ENCODE measurements at regions of chr1 and their contacts with region 1.

Region 1: GRCh38 chr1:17502326-17502778 is 37.1 kb upstream of the ARHGEF10L start:
- DNase-seq: peak; percentile 96
- H3K4me3 ChIP-seq: no peak overlapping the region
- H3K27ac ChIP-seq: peak overlapping the region; percentile 55 to 78 (median 72)
- H3K4me1 ChIP-seq: peaks cover 0 to 14% (median 13%) of the 10 kb centered on the region in 4 donors
- H3K27me3 ChIP-seq: no peaks in the 10 kb centered on the region
- CTCF ChIP-seq: peak; percentile 94 to 98 (median 97)
- EP300 ChIP-seq: no peak
- POLR2A ChIP-seq: no peak

Region 2: DNA sequence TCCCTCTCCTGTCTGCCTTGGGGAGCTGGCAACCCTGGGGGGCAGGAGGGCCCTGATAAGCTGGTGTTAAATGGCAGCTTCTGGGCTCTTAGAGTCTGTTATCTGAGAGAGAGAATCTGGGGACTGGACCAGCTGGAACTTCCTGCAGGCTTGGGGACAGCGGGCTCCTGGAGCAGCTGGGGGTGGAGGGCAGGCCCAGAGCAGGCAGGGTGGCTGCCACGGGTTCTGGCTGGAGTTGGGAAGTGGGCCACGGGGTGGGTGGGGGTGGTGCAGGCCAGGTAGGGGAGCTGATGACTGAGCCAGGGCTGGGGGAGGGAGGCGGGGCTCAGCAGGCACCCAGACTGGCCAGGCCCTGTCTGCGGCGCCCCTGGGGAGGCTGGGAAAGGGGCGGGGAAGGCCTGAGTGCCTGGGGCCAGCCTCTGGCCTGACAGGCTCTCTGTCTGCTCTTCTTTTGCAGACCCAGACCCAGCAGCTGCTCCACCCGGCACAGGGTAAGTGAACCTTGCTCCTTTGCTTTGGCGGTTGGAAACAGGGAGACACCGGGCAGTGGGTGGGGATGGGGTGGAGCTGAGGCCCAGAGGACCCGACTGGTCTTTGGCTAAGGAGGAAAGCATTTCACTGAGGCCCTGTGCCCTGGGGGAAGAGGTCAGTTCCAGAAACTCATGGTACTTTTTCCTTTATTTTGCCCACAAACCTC is 85.8 kb after region 1 on chr1:
- intact Hi-C with region 1: loop called (anchors 5 kb)
- DNase-seq: no peak
- H3K4me3 ChIP-seq: no peak overlapping the region
- H3K27ac ChIP-seq: peak overlapping the region; percentile 82 to 88 (median 85)
- H3K4me1 ChIP-seq: peaks cover 53 to 73% (median 66%) of the 10 kb centered on the region in 4 donors
- H3K27me3 ChIP-seq: no peaks in the 10 kb centered on the region
- CTCF ChIP-seq: no peak
- EP300 ChIP-seq: no peak
- POLR2A ChIP-seq: no peak

Region 3: GRCh38 chr1:17606826-17607440 is 104.6 kb after region 1 on chr1:
- intact Hi-C with region 1: loop called (anchors 1 kb)
- DNase-seq: no peak
- H3K4me3 ChIP-seq: no peak overlapping the region
- H3K27ac ChIP-seq: peak overlapping the region; percentile 76 to 82 (median 78)
- H3K4me1 ChIP-seq: peaks cover 20 to 63% (median 55%) of the 10 kb centered on the region in 4 donors
- H3K27me3 ChIP-seq: no peaks in the 10 kb centered on the region
- CTCF ChIP-seq: peak; percentile 88 to 93 (median 91)
- EP300 ChIP-seq: no peak
- POLR2A ChIP-seq: no peak

Measured in esophagus muscularis mucosa (tissue), 4 donors.